ENCODE measurements at regions of chr2 and their contacts with region 1.

Region 1: DNA sequence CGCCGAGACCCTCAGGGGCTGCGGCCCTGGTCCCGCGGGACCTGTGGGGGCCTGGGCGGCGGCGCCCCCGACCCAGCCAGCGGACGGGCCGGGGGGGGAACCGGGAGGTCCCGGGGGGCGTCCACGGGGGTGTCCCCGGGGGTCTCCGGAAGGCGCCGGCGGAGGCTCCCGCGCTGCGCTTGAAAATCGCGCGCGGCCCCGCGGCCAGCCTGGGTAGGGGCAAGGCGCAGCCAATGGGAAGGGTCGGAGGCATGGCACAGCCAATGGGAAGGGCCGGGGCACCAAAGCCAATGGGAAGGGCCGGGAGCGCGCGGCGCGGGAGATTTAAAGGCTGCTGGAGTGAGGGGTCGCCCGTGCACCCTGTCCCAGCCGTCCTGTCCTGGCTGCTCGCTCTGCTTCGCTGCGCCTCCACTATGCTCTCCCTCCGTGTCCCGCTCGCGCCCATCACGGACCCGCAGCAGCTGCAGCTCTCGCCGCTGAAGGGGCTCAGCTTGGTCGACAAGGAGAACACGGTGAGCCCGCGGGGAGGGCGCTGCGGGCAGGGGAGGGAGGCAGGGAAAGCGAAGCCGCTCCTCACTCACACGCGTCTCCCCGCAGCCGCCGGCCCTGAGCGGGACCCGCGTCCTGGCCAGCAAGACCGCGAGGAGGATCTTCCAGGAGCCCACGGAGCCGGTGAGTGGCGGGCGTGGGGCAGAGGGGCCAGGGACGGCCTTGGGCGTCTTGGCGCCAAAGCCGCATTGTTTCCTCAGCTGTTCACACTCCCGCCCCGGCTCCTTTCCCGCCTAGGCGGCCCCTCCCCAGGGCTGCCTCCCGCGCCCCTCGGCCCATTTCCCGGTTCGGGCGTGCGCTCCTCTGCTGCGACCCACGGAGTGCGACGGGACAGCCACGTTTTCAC is at the start of gene RRM2:
- ATAC-seq: peak; percentile 67 to 87 (median 83)
- H3K4me3 ChIP-seq: peak within 1 kb of the TSS; percentile 39 to 52 (median 47)
- H3K27ac ChIP-seq: peak within 1 kb of the TSS in 1 of 2 donors; percentile 64
- H3K4me1 ChIP-seq: peaks cover 3 to 10% of the 10 kb centered on the region in 2 donors
- total RNA-seq, gene RRM2: 1.6 to 90.5 (median 4.6) TPM

Region 2: GRCh38 chr2:9525266-9525665 is 597.4 kb before region 1 on chr2:
- in situ Hi-C with region 1: no loop called
- ATAC-seq: no peak
- H3K4me3 ChIP-seq: no peak overlapping the region
- H3K27ac ChIP-seq: no peak overlapping the region
- H3K4me1 ChIP-seq: no peaks in the 10 kb centered on the region

Region 3: GRCh38 chr2:10220902-10221391 is 98.3 kb after region 1 on chr2:
- in situ Hi-C with region 1: no loop called
- ATAC-seq: peak in 1 of 8 experiments; percentile 52
- H3K4me3 ChIP-seq: no peak overlapping the region
- H3K27ac ChIP-seq: no peak overlapping the region
- H3K4me1 ChIP-seq: peaks cover 46 to 66% of the 10 kb centered on the region in 2 donors

Region 4: DNA sequence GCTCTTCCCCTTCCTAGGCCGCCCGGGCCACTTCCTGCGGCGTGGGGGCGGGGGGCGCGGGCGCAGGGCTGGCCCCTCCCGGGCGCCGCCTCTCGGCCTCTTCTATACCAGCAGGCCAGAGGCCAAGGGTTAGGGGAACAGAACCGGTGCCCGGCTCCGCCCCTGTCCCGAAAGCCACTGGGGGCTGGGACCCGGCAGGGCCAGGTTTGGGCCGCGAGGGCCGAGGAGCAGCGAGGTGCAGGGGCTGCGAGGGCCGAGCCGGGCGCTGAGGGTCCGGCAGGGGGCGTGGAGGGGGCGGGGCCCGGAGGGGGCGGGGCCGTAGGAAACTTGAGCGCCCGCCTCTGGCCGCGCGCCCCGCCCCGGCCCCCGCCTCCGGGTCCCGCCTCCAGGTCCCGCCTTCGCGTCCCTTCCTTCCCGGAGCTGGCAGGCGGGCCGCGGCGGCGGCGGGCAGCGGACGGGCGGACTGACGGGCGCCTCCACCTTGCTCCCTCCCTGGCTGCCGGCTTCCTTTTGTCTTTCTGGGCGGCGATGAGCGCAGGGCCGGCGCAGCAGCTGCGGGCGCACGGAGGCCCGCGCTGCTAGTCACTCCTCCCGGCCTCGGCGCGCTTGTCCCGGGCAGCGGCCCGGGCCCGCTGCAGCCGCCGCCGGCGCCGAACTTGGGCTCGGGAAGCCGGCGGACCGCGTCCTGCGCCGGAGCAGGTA is 180.0 kb after region 1 on chr2 and contains the start of gene HPCAL1:
- in situ Hi-C with region 1: loop called in 1 of 9 experiments (anchors 25 kb)
- ATAC-seq: peak; percentile 69 to 87 (median 76)
- H3K4me3 ChIP-seq: peak within 1 kb of the TSS; percentile 50 to 65 (median 58)
- H3K27ac ChIP-seq: peak within 1 kb of the TSS in 1 of 2 donors; percentile 73
- H3K4me1 ChIP-seq: peaks cover 19 to 21% of the 10 kb centered on the region in 2 donors
- total RNA-seq, gene HPCAL1: 19.0 to 43.2 (median 24.9) TPM

Region 5: GRCh38 chr2:10408649-10409579 is 286.3 kb after region 1 on chr2:
- in situ Hi-C with region 1: loop called in 6 of 9 experiments (anchors 10 to 25 kb)
- ATAC-seq: peak; percentile 52 to 93 (median 87)
- H3K4me3 ChIP-seq: no peak overlapping the region
- H3K27ac ChIP-seq: no peak overlapping the region
- H3K4me1 ChIP-seq: peaks cover 19 to 23% of the 10 kb centered on the region in 2 donors

Region 6: DNA sequence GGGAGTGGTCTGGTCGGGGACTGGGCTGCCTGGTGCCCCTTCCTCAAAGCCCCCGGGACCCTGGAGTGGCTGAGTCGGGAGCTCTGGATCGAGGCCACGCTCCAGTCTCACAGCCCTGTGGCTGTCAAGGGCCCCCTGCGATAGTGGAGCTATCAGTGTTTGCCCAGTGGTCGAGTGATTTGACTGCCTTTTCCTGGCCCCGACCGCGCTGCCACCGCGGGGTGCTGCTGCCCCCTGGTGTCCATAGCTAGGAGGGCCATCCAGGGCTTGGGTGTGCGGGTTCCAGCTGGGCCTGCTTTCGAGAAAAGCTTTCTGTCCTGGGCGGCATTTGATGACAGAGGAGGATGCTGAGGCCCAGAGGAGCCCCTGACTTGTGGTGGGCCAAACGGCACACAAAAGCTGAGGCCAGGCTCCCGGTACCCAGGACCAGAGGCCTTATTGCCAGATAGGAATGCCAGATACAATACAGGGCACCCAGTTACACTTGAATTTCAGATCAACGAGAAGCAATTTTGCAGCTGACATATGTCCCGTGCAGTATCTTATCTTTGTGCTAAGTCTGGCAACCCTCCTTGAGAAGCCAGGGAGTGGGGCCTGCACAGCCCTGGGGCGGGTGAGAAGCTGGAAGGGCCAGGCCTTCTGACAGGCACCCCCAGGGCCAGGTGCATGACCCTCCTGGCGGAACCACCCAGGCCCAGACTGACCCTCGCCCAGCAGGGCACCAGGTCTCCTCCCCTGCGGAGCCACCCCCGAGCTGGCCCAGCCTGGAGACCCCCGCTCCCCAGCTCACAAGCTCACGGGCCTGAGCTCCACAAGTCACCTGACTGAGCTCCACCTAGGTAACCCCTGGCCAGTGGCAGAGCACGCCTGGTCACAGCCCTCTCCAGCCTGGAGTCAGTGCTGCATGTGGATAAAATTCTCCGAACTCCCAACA is 312.5 kb after region 1 on chr2:
- in situ Hi-C with region 1: loop called in 2 of 9 experiments (anchors 10 kb)
- ATAC-seq: peak; percentile 38 to 86 (median 80)
- H3K4me3 ChIP-seq: no peak overlapping the region
- H3K27ac ChIP-seq: no peak overlapping the region
- H3K4me1 ChIP-seq: peaks cover 3 to 17% of the 10 kb centered on the region in 2 donors

Region 7: DNA sequence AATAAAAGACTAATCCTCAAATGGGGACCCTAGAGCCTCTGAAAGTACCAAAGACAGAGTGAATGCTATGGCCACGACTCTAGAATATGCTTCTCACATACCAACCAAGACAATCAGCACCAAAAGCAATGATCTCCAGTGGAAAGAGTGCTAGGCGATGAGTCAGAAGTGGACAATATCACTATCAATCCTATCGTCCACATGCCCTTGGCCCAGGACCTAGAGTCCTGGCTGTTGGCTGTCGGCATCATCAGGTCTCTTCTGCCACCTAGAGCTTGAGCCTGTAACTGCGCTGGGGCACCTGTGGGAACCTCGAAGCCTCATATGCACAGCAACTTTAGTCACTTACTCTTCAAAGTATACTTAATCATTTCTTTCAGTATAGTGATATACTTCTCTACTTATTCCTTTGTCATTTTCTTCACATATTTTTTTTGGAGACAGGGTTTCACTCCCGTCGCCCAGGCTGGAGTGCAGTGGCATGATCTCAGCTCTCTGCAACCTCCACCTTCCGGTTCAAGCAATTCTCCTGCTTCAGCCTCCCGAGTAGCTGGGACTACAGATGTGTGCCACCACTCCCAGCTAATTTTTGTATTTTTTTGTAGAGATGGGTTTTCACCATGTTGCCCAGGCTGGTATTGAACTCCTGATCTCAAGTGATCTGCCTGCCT is 537.4 kb after region 1 on chr2:
- in situ Hi-C with region 1: loop called in 1 of 9 experiments (anchors 25 kb)
- ATAC-seq: peak in 7 of 8 experiments; percentile 25 to 86 (median 73)
- H3K4me3 ChIP-seq: no peak overlapping the region
- H3K27ac ChIP-seq: no peak overlapping the region
- H3K4me1 ChIP-seq: no peaks in the 10 kb centered on the region